CD8-positive, alpha-beta T cell (primary cell): ENCODE measurements at regions of chr5 and their contacts with region 1.

Region 1: GRCh38 chr5:66080664-66081063 is 63.4 kb upstream of the SREK1 start:
- DNase-seq: no peak
- ATAC-seq: no peak
- H3K4me3 ChIP-seq: no peak overlapping the region
- H3K4me3 Mint-ChIP-seq: no peak overlapping the region
- H3K27ac ChIP-seq: no peak overlapping the region
- H3K27ac Mint-ChIP-seq: no peak overlapping the region
- H3K4me1 ChIP-seq: no peaks in the 10 kb centered on the region
- H3K4me1 Mint-ChIP-seq: peaks cover 12% of the 10 kb centered on the region
- H3K27me3 ChIP-seq: no peaks in the 10 kb centered on the region
- H3K27me3 Mint-ChIP-seq: no peaks in the 10 kb centered on the region
- CTCF ChIP-seq: no peak

Region 2: DNA sequence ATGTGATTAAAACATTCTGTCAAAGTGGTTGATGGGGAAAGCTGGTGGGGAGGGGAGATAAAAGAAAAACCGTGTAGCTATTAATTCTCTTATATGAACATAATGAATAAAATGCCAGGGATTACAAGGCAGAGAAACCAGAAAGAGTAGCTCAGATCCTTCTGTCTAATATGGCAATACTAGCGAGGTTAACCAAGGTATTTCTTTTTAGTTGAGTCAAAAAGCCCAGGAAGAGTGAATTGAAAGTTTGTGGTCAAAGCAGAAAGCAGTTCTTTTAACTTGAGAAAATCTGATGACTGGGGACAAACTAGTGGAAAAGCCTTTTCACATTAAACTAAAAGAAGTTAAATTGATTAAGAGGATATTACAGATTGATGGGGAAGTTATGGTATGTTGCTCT is 78.2 kb before region 1 on chr5:
- CTCF ChIA-PET with region 1: no interaction called
- POLR2A ChIA-PET with region 1: no interaction called
- intact Hi-C with region 1: no loop called
- DNase-seq: no peak
- ATAC-seq: no peak
- H3K4me3 ChIP-seq: no peak overlapping the region
- H3K4me3 Mint-ChIP-seq: no peak overlapping the region
- H3K27ac ChIP-seq: peak overlapping the region in 1 of 2 experiments; percentile 38
- H3K27ac Mint-ChIP-seq: peak overlapping the region; percentile 66
- H3K4me1 ChIP-seq: peaks cover 9% of the 10 kb centered on the region
- H3K4me1 Mint-ChIP-seq: peaks cover 55% of the 10 kb centered on the region
- H3K27me3 ChIP-seq: no peaks in the 10 kb centered on the region
- H3K27me3 Mint-ChIP-seq: no peaks in the 10 kb centered on the region
- CTCF ChIP-seq: no peak

Region 3: DNA sequence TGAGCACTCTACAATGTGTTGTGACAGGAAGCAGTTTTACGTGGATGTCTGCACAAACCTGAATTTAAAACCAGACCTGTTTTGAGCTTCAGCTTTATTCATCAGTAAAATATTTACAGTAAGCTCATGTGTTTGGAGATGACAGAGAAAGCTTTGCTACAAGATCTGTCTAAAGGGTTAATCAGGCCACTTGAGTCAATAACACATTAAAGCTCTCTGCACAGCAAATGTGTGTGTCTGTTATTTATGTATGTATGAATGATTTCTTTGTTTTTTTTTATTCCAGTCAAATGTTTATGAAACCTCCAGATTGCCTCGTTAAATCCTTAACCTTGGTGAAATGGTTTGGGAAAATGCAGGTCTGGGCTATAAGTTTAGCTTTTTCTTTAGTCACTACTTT is 13.8 kb before region 1 on chr5:
- CTCF ChIA-PET with region 1: interaction called, 3 read pairs
- POLR2A ChIA-PET with region 1: no interaction called
- intact Hi-C with region 1: loop called in 1 of 2 experiments (anchors 2 kb)
- DNase-seq: no peak
- ATAC-seq: no peak
- H3K4me3 ChIP-seq: no peak overlapping the region
- H3K4me3 Mint-ChIP-seq: no peak overlapping the region
- H3K27ac ChIP-seq: no peak overlapping the region
- H3K27ac Mint-ChIP-seq: no peak overlapping the region
- H3K4me1 ChIP-seq: peaks cover 16% of the 10 kb centered on the region
- H3K4me1 Mint-ChIP-seq: peaks cover 41% of the 10 kb centered on the region
- H3K27me3 ChIP-seq: no peaks in the 10 kb centered on the region
- H3K27me3 Mint-ChIP-seq: no peaks in the 10 kb centered on the region
- CTCF ChIP-seq: no peak

Region 4: DNA sequence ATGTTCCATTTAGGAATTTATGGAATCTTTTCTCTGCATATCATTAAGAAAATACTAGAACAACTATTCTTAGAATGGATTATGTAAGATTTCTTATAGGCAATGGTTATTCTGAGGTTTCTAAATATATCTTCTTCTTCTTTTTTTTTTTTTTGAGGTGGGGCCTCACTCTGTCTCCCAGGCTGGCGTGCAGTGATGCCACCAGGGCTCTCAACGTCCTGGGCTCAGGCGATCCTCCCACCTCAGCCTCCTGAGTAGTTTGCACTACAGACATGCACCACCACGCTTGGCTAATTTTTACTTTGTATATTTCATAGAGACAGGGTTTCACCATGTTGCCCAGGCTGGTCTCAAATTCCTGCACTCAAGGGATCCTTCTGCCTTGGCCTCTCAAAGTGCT is 200.6 kb after region 1 on chr5:
- CTCF ChIA-PET with region 1: no interaction called
- POLR2A ChIA-PET with region 1: no interaction called
- intact Hi-C with region 1: no loop called
- DNase-seq: no peak
- ATAC-seq: no peak
- H3K4me3 ChIP-seq: no peak overlapping the region
- H3K4me3 Mint-ChIP-seq: no peak overlapping the region
- H3K27ac ChIP-seq: no peak overlapping the region
- H3K27ac Mint-ChIP-seq: no peak overlapping the region
- H3K4me1 ChIP-seq: no peaks in the 10 kb centered on the region
- H3K4me1 Mint-ChIP-seq: no peaks in the 10 kb centered on the region
- H3K27me3 ChIP-seq: no peaks in the 10 kb centered on the region
- H3K27me3 Mint-ChIP-seq: peaks cover 12% of the 10 kb centered on the region
- CTCF ChIP-seq: no peak

Region 5: DNA sequence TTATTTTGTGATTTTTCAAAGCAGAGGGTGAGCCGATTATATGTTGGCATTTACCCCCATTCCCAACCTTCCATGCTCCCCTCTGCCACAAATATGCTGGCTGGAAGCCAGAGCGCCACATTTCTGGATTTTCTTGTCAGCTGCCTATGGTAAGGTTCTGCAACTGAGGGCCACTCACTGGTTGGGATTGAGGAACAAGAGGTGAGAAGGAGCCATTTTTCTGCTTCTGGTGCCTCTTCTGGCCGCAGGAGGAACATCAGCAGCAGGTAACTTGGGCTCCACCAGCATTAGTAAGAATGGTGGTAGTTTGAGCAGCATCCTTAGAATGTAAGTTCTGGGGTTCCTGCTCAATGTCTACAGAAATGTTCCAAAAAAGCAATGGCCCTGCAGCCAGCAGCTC is 356.1 kb after region 1 on chr5:
- CTCF ChIA-PET with region 1: no interaction called
- POLR2A ChIA-PET with region 1: no interaction called
- intact Hi-C with region 1: no loop called
- DNase-seq: no peak
- ATAC-seq: no peak
- H3K4me3 ChIP-seq: no peak overlapping the region
- H3K4me3 Mint-ChIP-seq: no peak overlapping the region
- H3K27ac ChIP-seq: no peak overlapping the region
- H3K27ac Mint-ChIP-seq: no peak overlapping the region
- H3K4me1 ChIP-seq: no peaks in the 10 kb centered on the region
- H3K4me1 Mint-ChIP-seq: no peaks in the 10 kb centered on the region
- H3K27me3 ChIP-seq: no peaks in the 10 kb centered on the region
- H3K27me3 Mint-ChIP-seq: no peaks in the 10 kb centered on the region
- CTCF ChIP-seq: no peak